MCF 10A (cell line): ENCODE measurements at regions of chr3 and their contacts with region 1.

Region 1: GRCh38 chr3:149377408-149378377 is at the start of gene TM4SF1:
- DNase-seq: peak; percentile 97
- H3K4me3 Mint-ChIP-seq: peak within 1 kb of the TSS; percentile 72
- H3K27ac Mint-ChIP-seq: peak within 1 kb of the TSS; percentile 68
- H3K4me1 Mint-ChIP-seq: peaks cover 47% of the 10 kb centered on the region
- H3K27me3 Mint-ChIP-seq: no peaks in the 10 kb centered on the region
- CTCF ChIP-seq: no peak
- total RNA-seq, gene TM4SF1: 20.1 and 27.7 TPM in 2 replicates

Region 2: DNA sequence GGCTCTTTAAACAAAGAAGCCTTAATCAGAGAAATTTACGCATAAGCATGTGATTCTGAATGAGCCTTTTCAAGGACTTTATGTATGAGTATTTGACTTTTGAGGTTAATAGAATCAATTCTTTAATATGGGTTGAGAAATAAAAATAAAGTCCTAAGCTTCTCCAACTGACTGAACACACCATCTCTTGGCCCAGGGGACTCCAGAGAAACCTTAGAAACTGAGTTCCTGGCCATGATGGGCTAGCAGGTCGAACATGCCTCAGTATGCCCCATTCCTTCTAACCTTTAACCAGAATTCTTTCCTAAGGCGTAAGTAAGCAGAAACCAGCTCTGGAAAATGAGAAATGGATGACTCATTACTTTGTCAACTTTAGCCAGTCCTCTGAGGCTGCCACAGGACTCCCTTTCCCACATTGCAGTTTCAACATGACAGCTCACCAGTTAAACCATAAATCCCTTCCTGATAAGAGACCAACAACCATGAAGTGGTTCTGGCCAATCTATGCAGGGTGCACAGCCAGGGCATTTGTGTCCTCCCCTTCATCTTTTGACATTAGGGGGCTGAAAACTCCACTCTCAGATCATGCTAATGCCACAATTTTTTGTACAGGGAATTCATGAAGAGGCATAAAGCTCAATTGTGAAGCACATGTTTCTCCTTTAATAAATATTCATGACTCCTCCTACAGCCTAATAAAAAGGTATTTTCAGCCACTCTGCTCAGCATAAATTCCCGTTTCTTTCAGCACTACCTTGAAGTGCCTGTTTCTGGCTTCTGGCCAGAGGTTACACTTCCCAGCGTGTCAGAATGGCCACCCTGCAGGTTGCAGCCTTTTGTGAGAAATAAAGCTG is 77.5 kb before region 1 on chr3:
- CTCF ChIA-PET with region 1: no interaction called
- POLR2A ChIA-PET with region 1: interaction called, 32 read pairs
- intact Hi-C with region 1: no loop called
- DNase-seq: peak; percentile 97
- H3K4me3 Mint-ChIP-seq: peak overlapping the region; percentile 30
- H3K27ac Mint-ChIP-seq: peak overlapping the region; percentile 90
- H3K4me1 Mint-ChIP-seq: peaks cover 21% of the 10 kb centered on the region
- H3K27me3 Mint-ChIP-seq: no peaks in the 10 kb centered on the region
- CTCF ChIP-seq: no peak

Region 3: GRCh38 chr3:149366941-149367840 is 10.5 kb before region 1 on chr3:
- CTCF ChIA-PET with region 1: no interaction called
- POLR2A ChIA-PET with region 1: interaction called, 217 read pairs
- intact Hi-C with region 1: no loop called
- DNase-seq: peak; percentile 90
- H3K4me3 Mint-ChIP-seq: no peak overlapping the region
- H3K27ac Mint-ChIP-seq: peak overlapping the region; percentile 77
- H3K4me1 Mint-ChIP-seq: peaks cover 31% of the 10 kb centered on the region
- H3K27me3 Mint-ChIP-seq: no peaks in the 10 kb centered on the region
- CTCF ChIP-seq: no peak

Region 4: GRCh38 chr3:149473357-149474249 is 95.9 kb after region 1 on chr3:
- CTCF ChIA-PET with region 1: interaction called, 15 read pairs
- POLR2A ChIA-PET with region 1: interaction called, 29 read pairs
- intact Hi-C with region 1: no loop called
- DNase-seq: peak; percentile 97
- H3K4me3 Mint-ChIP-seq: no peak overlapping the region
- H3K27ac Mint-ChIP-seq: peak overlapping the region; percentile 33
- H3K4me1 Mint-ChIP-seq: peaks cover 20% of the 10 kb centered on the region
- H3K27me3 Mint-ChIP-seq: no peaks in the 10 kb centered on the region
- CTCF ChIP-seq: no peak

Region 5: GRCh38 chr3:149575961-149576564 is 198.4 kb after region 1 on chr3:
- CTCF ChIA-PET with region 1: no interaction called
- POLR2A ChIA-PET with region 1: interaction called, 3 read pairs
- intact Hi-C with region 1: loop called (anchors 10 kb)
- DNase-seq: peak; percentile 98
- H3K4me3 Mint-ChIP-seq: peak overlapping the region; percentile 55
- H3K27ac Mint-ChIP-seq: peak overlapping the region; percentile 77
- H3K4me1 Mint-ChIP-seq: peaks cover 66% of the 10 kb centered on the region
- H3K27me3 Mint-ChIP-seq: no peaks in the 10 kb centered on the region
- CTCF ChIP-seq: no peak

Region 6: GRCh38 chr3:149726716-149727407 is 349.2 kb after region 1 on chr3:
- CTCF ChIA-PET with region 1: no interaction called
- POLR2A ChIA-PET with region 1: no interaction called
- intact Hi-C with region 1: no loop called
- DNase-seq: no peak
- H3K4me3 Mint-ChIP-seq: no peak overlapping the region
- H3K27ac Mint-ChIP-seq: no peak overlapping the region
- H3K4me1 Mint-ChIP-seq: no peaks in the 10 kb centered on the region
- H3K27me3 Mint-ChIP-seq: no peaks in the 10 kb centered on the region
- CTCF ChIP-seq: no peak